Activated T-helper 2 cell treated with anti-CD3 and anti-CD28 coated beads, Interferon-gamma antibody, Interleukin-2, Interleukin-4, amounts not matched to agents 10 μg/mL and 5 μg/mL and 100 μg/mL, durations not matched to agents 14 hours and 24 hours and 36 hours (primary cell): ENCODE measurements at regions of chr20 and their contacts with region 1.

Region 1: DNA sequence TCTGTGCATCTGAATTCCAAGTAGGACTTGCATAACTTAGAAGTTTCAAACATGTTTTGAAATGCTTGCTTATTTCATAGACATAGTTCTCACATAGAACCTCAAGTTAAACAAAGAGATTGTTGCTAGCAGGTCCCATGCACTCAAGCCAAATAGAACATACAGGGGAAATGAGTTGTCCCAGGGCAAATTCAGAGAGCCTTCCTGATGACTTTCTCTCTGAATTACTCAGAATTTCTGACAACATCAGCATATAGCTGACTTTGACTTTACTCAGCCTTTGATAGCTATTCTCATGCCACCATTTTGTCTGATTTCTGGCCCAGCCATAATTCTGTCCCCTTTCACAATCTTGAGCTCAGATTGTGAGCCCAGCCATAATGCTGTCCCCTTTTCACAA is 333.2 kb upstream of the PLCB4 start:
- DNase-seq: no peak
- H3K4me3 Mint-ChIP-seq: no peak overlapping the region
- H3K27ac Mint-ChIP-seq: no peak overlapping the region
- H3K4me1 Mint-ChIP-seq: peaks cover 5% of the 10 kb centered on the region
- H3K27me3 Mint-ChIP-seq: no peaks in the 10 kb centered on the region

Region 2: GRCh38 chr20:8664778-8665177 is 70.9 kb before region 1 on chr20:
- intact Hi-C with region 1: loop called (anchors 2 kb)
- DNase-seq: no peak
- H3K4me3 Mint-ChIP-seq: no peak overlapping the region
- H3K27ac Mint-ChIP-seq: no peak overlapping the region
- H3K4me1 Mint-ChIP-seq: no peaks in the 10 kb centered on the region
- H3K27me3 Mint-ChIP-seq: no peaks in the 10 kb centered on the region

Region 3: GRCh38 chr20:8756410-8756809 is 20.7 kb after region 1 on chr20:
- intact Hi-C with region 1: no loop called
- DNase-seq: no peak
- H3K4me3 Mint-ChIP-seq: no peak overlapping the region
- H3K27ac Mint-ChIP-seq: no peak overlapping the region
- H3K4me1 Mint-ChIP-seq: no peaks in the 10 kb centered on the region
- H3K27me3 Mint-ChIP-seq: no peaks in the 10 kb centered on the region

Region 4: GRCh38 chr20:8790442-8791074 is 54.9 kb after region 1 on chr20:
- intact Hi-C with region 1: no loop called
- DNase-seq: no peak
- H3K4me3 Mint-ChIP-seq: no peak overlapping the region
- H3K27ac Mint-ChIP-seq: no peak overlapping the region
- H3K4me1 Mint-ChIP-seq: no peaks in the 10 kb centered on the region
- H3K27me3 Mint-ChIP-seq: no peaks in the 10 kb centered on the region